ENCODE measurements at regions of chr2 and their contacts with region 1.

Region 1: GRCh38 chr2:227106845-227107759 is 56.9 kb downstream of the COL4A4 start:
- DNase-seq: peak; percentile 32
- H3K4me3 ChIP-seq: no peak overlapping the region
- H3K27ac ChIP-seq: no peak overlapping the region
- H3K4me1 ChIP-seq: no peaks in the 10 kb centered on the region
- H3K27me3 ChIP-seq: no peaks in the 10 kb centered on the region
- CTCF ChIP-seq: peak; percentile 26 to 34
- POLR2A ChIP-seq: no peak

Region 2: GRCh38 chr2:225122583-225123486 is 1984.3 kb before region 1 on chr2:
- CTCF ChIA-PET with region 1: no interaction called
- POLR2A ChIA-PET with region 1: interaction called, 5 read pairs
- dilution Hi-C with region 1: no loop called
- intact Hi-C with region 1: loop called (anchors 5 kb)
- DNase-seq: peak; percentile 15
- H3K4me3 ChIP-seq: no peak overlapping the region
- H3K27ac ChIP-seq: no peak overlapping the region
- H3K4me1 ChIP-seq: no peaks in the 10 kb centered on the region
- H3K27me3 ChIP-seq: peaks cover 0 to 2% of the 10 kb centered on the region in 2 experiments
- CTCF ChIP-seq: peak; percentile 21 to 27
- POLR2A ChIP-seq: no peak

Region 3: DNA sequence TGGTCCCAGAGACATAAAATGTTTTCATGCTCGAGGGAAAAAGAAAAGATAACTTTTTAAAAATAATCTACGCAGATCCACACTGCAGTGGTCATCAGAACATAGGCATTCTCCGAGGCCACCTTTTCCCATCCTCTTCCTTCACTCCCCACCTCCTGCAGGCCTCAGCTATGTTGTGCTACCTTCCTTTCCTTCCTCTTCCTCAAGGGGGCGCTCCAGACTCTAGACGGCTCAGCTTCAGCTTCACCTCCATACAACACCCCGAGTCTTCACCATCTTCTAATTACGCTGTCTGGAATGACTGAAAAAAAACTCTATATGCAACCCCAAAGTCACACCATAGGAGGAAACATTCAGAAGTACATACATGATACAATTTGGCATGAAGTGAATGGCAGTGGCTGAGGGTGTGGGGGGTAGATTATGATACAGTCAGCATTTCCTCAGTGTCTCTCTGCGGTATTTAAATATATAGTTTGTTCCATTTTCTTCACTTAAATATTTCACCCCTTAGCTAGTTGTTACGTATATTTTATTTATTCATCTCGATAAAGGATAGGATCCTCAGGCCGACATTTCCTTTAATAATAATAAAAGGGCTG is 891.1 kb before region 1 on chr2:
- CTCF ChIA-PET with region 1: no interaction called
- POLR2A ChIA-PET with region 1: no interaction called
- dilution Hi-C with region 1: no loop called
- intact Hi-C with region 1: loop called (anchors 5 kb)
- DNase-seq: peak; percentile 10
- H3K4me3 ChIP-seq: no peak overlapping the region
- H3K27ac ChIP-seq: no peak overlapping the region
- H3K4me1 ChIP-seq: peaks cover 3% of the 10 kb centered on the region
- H3K27me3 ChIP-seq: no peaks in the 10 kb centered on the region
- CTCF ChIP-seq: peak; percentile 23 to 34
- POLR2A ChIP-seq: no peak

Region 4: GRCh38 chr2:226256237-226256636 is 850.9 kb before region 1 on chr2:
- CTCF ChIA-PET with region 1: no interaction called
- POLR2A ChIA-PET with region 1: no interaction called
- dilution Hi-C with region 1: no loop called
- intact Hi-C with region 1: loop called (anchors 5 kb)
- DNase-seq: no peak
- H3K4me3 ChIP-seq: no peak overlapping the region
- H3K27ac ChIP-seq: no peak overlapping the region
- H3K4me1 ChIP-seq: no peaks in the 10 kb centered on the region
- H3K27me3 ChIP-seq: no peaks in the 10 kb centered on the region
- CTCF ChIP-seq: no peak
- POLR2A ChIP-seq: no peak

Region 5: DNA sequence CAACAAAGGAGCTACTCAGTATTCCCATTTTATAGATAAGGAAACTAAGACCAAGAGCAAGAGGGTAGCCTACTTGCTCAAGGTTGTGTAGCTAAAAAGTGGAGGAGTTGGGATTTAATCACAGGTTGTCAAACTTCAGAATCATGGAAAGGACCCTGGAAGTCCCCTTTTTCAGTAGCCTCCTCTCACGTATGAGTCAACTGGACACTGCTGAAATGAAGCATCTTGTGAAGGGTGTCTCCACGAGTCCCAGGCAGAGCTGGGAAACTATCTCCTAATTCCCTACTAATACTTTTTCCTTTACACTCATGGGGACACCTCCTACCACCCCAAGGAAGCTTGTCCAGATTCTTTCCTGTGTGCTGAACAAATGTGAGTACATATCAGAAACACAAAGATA is 115.4 kb before region 1 on chr2:
- CTCF ChIA-PET with region 1: no interaction called
- POLR2A ChIA-PET with region 1: no interaction called
- dilution Hi-C with region 1: no loop called
- intact Hi-C with region 1: no loop called
- DNase-seq: no peak
- H3K4me3 ChIP-seq: no peak overlapping the region
- H3K27ac ChIP-seq: no peak overlapping the region
- H3K4me1 ChIP-seq: no peaks in the 10 kb centered on the region
- H3K27me3 ChIP-seq: no peaks in the 10 kb centered on the region
- CTCF ChIP-seq: no peak
- POLR2A ChIP-seq: no peak

Region 6: DNA sequence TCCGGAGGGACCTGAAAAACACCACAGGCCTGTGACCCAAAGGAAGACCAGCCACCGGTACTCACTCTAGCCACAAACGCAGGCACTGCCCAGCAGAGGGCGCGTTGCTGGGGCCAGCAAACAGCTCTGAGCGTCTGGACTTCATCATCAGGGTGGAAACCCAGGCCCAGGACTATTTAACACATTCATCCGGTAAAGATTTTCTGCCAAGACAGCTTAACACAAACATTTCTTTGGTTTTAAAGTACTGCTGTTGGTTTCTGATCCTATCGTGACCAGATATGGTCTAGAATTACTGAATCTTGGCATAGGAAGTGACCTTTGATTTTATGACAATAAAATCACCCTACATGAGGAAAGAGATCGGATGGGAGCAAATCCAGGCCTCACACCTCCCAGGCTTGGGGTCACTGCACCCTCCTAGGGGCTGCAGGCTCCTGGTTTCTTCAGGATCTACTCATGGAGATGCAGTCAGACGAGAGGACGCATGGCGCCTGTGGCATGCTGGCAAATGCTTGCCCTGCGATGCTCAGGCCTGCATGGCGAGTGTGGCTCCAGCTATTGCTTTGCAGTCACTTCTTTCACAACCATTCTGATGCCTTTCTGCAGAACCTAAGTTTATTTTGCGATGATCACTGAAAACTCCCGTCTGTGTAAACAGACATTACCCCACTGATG is 73.5 kb before region 1 on chr2:
- CTCF ChIA-PET with region 1: no interaction called
- POLR2A ChIA-PET with region 1: no interaction called
- dilution Hi-C with region 1: no loop called
- intact Hi-C with region 1: loop called (anchors 2 kb)
- DNase-seq: no peak
- H3K4me3 ChIP-seq: no peak overlapping the region
- H3K27ac ChIP-seq: no peak overlapping the region
- H3K4me1 ChIP-seq: no peaks in the 10 kb centered on the region
- H3K27me3 ChIP-seq: no peaks in the 10 kb centered on the region
- CTCF ChIP-seq: peak; percentile 15 to 38
- POLR2A ChIP-seq: no peak